CD4-positive, alpha-beta T cell (primary cell): ENCODE measurements at regions of chr9 and their contacts with region 1.

Region 1: GRCh38 chr9:19331877-19332276 is 48.2 kb downstream of the RPS6 start:
- DNase-seq: no peak
- ATAC-seq: no peak
- H3K4me3 ChIP-seq: no peak overlapping the region
- H3K4me3 Mint-ChIP-seq: no peak overlapping the region
- H3K27ac ChIP-seq: no peak overlapping the region
- H3K27ac Mint-ChIP-seq: no peak overlapping the region
- H3K4me1 ChIP-seq: no peaks in the 10 kb centered on the region
- H3K4me1 Mint-ChIP-seq: no peaks in the 10 kb centered on the region
- H3K27me3 ChIP-seq: no peaks in the 10 kb centered on the region
- H3K27me3 Mint-ChIP-seq: no peaks in the 10 kb centered on the region
- CTCF ChIP-seq: no peak

Region 2: GRCh38 chr9:19313573-19313972 is 18.3 kb before region 1 on chr9:
- CTCF ChIA-PET with region 1: no interaction called
- POLR2A ChIA-PET with region 1: no interaction called
- intact Hi-C with region 1: loop called in 1 of 2 experiments (anchors 2 kb)
- DNase-seq: no peak
- ATAC-seq: no peak
- H3K4me3 ChIP-seq: no peak overlapping the region
- H3K4me3 Mint-ChIP-seq: no peak overlapping the region
- H3K27ac ChIP-seq: no peak overlapping the region
- H3K27ac Mint-ChIP-seq: no peak overlapping the region
- H3K4me1 ChIP-seq: no peaks in the 10 kb centered on the region
- H3K4me1 Mint-ChIP-seq: no peaks in the 10 kb centered on the region
- H3K27me3 ChIP-seq: no peaks in the 10 kb centered on the region
- H3K27me3 Mint-ChIP-seq: no peaks in the 10 kb centered on the region
- CTCF ChIP-seq: no peak